HAP-1 (cell line): ENCODE measurements at regions of chr2 and their contacts with region 1.

Region 1: GRCh38 chr2:25951071-25951547 is 31.2 kb downstream of the KIF3C start:
- DNase-seq: peak; percentile 76 to 90
- H3K4me3 ChIP-seq: no peak overlapping the region
- H3K4me1 ChIP-seq: peaks cover 9% of the 10 kb centered on the region
- H3K27me3 ChIP-seq: no peaks in the 10 kb centered on the region

Region 2: DNA sequence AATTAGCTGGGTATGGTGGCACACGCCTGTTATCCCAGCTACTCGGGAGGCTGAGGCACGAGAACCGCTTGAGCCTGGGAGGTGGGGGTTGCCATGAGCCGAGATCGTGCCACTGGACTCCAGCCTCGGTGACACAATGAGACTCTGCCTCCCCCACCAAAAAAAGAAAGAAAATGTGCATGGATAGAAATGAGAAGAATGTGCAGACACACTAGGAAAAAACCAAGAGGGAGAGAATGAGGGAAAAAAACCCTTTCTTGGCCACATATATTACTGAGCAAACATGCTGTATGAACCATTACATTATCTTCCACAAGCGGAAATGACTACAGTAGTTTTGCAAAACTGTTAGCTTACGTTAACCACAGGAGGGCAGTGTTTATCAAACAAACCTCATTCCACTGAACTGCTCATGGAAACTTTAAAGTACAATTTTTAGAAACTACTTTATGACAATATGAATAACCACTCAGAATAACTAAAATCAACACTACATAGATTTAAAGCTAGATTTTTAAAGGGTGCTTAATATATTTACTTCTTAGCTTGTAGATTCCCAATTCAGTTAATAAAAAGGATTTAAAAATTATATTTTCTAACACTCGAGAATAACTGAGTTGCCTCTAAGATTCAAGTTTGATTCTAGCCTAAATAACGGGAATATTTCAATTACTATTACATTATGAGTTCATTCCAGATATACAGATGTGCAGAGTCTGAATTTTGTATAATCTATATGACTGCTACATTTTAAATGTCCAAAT is 99.2 kb before region 1 on chr2:
- in situ Hi-C with region 1: loop called (anchors 5 kb)
- DNase-seq: peak; percentile 30 to 68
- H3K4me3 ChIP-seq: no peak overlapping the region
- H3K4me1 ChIP-seq: peaks cover 8% of the 10 kb centered on the region
- H3K27me3 ChIP-seq: no peaks in the 10 kb centered on the region; the same call in 1 of the 2 replicates